Activated T-helper 1 cell treated with anti-CD3 and anti-CD28 coated beads, Interleukin-12 subunit alpha, Interleukin-12 subunit beta, Interleukin-2, Interleukin-4 antibody, amounts not matched to agents 30 ng/mL and 10 ng/mL and 1 ng/mL, durations not matched to agents 14 hours and 24 hours and 36 hours (primary cell): ENCODE measurements at regions of chr18 and their contacts with region 1.

Region 1: DNA sequence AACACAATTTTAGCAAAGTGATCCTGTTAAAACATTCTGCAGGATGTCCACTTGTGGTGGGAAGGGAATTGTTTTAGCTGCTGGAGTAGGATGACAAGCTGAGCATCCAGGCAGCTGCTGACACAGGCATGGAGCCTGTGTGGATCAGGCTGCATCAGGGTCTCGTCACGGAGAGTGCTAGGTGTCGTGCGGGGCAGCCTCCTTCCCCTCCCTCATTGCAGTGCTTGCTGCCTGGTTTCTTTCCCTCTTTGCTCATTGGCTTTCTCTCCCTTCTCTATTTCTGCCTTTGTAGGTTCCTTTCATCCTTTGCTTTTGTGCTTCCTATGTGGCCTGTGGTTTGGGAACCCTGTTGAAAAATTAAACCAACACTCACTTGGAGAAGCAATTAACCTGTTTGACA is 172.9 kb downstream of the TPGS2 start:
- DNase-seq: no peak
- H3K4me3 Mint-ChIP-seq: no peak overlapping the region
- H3K27ac Mint-ChIP-seq: no peak overlapping the region
- H3K4me1 Mint-ChIP-seq: no peaks in the 10 kb centered on the region
- H3K27me3 Mint-ChIP-seq: peaks cover 4% of the 10 kb centered on the region

Region 2: GRCh38 chr18:37243741-37244140 is 587.8 kb after region 1 on chr18:
- intact Hi-C with region 1: no loop called
- DNase-seq: no peak
- H3K4me3 Mint-ChIP-seq: no peak overlapping the region
- H3K27ac Mint-ChIP-seq: no peak overlapping the region
- H3K4me1 Mint-ChIP-seq: no peaks in the 10 kb centered on the region
- H3K27me3 Mint-ChIP-seq: peaks cover 37% of the 10 kb centered on the region

Region 3: DNA sequence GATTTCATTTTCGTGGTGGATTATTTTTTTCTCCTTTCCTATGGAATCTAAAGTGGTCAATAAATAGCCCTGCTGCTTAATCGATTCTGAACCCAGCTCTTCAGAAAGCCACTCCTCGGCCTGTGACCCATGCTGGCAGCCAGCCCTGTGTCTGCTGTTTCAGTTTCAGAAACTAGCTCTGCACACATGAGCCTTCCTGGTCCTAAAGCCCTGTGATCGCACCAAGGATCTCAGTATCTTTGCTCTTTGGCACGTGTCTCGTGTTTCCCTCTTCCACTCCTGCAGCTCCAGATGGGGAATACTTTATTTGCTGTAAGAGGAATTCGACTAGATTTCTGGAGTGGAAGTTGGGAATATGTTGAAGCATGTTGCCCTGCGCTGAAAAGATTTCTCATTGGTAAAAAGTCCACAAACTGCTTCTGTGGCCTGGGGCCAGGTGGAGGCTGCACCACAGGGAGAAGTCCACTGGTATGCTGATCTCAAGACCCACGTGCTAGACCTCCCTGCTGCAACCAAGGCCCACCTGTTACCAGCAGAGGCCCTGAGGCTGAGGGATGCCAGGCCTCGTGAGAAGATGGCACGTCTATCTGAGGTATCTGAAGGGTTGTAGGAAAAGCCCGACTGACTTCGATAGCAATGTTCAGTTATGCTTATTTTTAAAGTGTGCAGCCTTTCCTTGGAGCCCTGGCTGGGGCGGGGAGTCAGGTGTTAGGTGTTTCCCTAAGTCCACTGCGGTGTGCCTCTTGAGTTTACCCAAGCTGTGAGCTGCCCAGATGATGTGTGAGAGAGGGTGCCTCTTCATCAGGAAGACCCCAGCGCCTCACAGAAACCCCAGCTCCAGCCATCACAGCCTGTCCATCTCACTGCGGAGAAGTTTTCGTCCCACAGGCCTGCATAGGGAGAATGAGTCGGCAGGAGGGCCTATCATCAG is 943.3 kb after region 1 on chr18:
- intact Hi-C with region 1: loop called (anchors 5 kb)
- DNase-seq: no peak
- H3K4me3 Mint-ChIP-seq: no peak overlapping the region
- H3K27ac Mint-ChIP-seq: no peak overlapping the region
- H3K4me1 Mint-ChIP-seq: no peaks in the 10 kb centered on the region
- H3K27me3 Mint-ChIP-seq: no peaks in the 10 kb centered on the region